HEK293 (cell line): ENCODE measurements at regions of chr10 and their contacts with region 1.

Region 1: GRCh38 chr10:117226824-117227451 is 14.0 kb upstream of the SLC18A2 start:
- H3K4me3 ChIP-seq: no peak overlapping the region
- H3K27ac ChIP-seq: no peak overlapping the region
- H3K4me1 ChIP-seq: no peaks in the 10 kb centered on the region; the same call in 1 of the 2 replicates
- CTCF ChIP-seq: no peak; the same call in 1 of the 2 replicates

Region 2: GRCh38 chr10:117174439-117175214 is 52.3 kb before region 1 on chr10:
- CTCF ChIA-PET with region 1: no interaction called
- POLR2A ChIA-PET with region 1: no interaction called
- H3K4me3 ChIP-seq: peak overlapping the region; percentile 25
- H3K27ac ChIP-seq: no peak overlapping the region
- H3K4me1 ChIP-seq: no peaks in the 10 kb centered on the region
- CTCF ChIP-seq: peak; percentile 84

Region 3: GRCh38 chr10:117320050-117320665 is 93.2 kb after region 1 on chr10:
- CTCF ChIA-PET with region 1: interaction called, 43 read pairs
- POLR2A ChIA-PET with region 1: no interaction called
- H3K4me3 ChIP-seq: no peak overlapping the region
- H3K27ac ChIP-seq: no peak overlapping the region
- H3K4me1 ChIP-seq: peaks cover 9% of the 10 kb centered on the region
- CTCF ChIP-seq: peak; percentile 34; the same call in 1 of the 2 replicates